ENCODE measurements at regions of chr18 and their contacts with region 1.

Region 1: DNA sequence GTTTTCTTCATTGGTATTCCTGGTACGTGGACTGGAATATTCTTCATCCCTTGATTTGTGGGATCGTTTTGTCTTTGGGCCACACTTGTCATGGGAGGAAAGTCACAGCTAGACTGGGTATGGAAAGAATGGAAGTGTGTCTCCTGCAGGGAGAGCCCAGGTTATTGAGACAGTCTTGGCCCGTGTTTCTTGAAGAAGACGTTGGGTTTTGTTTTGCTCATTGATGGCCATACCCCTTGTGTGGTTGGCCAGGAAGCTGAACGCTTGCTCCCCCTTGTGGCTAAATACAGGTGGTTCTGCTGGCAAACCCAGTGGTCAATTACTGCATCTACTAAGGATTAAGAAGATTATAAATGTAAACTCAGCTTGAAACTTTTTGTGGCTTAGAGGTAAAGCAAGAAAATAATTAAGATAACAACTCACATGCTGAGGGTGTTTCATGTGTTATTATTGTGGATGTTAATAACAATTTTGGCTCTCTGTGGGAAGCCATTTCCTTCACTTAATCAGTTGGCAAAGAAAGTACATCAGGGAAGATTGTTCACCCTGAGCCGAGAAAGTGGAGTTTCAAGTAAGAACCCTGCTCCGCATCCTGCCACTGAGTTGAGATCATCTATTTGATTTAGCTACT is 91.8 kb downstream of the NEDD4L start:
- DNase-seq: peak; percentile 74
- ATAC-seq: peak; percentile 69
- H3K4me3 ChIP-seq: peak overlapping the region; percentile 18; the same call in 1 of the 2 replicates
- H3K27ac ChIP-seq: no peak overlapping the region
- H3K4me1 ChIP-seq: peaks cover 8% of the 10 kb centered on the region
- H3K27me3 ChIP-seq: no peaks in the 10 kb centered on the region
- CTCF ChIP-seq: peak; percentile 79
- POLR2A ChIP-seq: no peak
- RAD21 ChIP-seq: peak; percentile 70

Region 2: DNA sequence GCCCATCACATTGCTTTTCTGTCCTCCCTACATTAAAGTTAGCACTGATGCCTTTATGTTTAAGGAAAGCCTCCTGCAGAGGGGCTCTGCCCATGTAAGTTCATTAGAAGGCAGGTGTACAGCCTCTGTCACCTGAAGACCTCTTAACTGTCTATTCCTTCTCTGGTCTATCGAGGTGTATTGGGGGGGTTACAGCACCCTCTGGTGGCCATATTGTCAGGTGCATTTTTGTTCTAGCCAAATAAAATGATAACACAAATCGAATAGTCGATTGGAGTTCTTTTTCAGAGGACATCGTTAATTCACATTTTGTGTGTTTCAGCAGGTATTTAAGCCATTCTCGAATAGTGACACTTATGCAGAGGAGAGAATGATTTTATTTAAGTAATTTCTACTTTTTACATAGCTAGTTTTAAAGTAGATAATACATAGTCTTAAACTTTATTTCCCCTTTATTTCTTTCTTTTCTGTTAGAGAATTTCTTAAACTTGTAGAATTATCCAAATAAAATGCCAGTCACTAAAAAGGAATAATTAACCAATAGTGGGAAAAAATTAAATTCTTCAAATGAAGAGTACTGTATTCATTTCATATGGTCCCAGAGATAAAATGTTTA is 45.0 kb after region 1 on chr18:
- CTCF ChIA-PET with region 1: no interaction called
- POLR2A ChIA-PET with region 1: no interaction called
- dilution Hi-C with region 1: no loop called
- in situ Hi-C with region 1: no loop called
- intact Hi-C with region 1: loop called (anchors 2 kb)
- DNase-seq: peak; percentile 47
- ATAC-seq: no peak
- H3K4me3 ChIP-seq: no peak overlapping the region
- H3K27ac ChIP-seq: no peak overlapping the region
- H3K4me1 ChIP-seq: peaks cover 23% of the 10 kb centered on the region
- H3K27me3 ChIP-seq: no peaks in the 10 kb centered on the region
- CTCF ChIP-seq: peak; percentile 77
- POLR2A ChIP-seq: no peak
- RAD21 ChIP-seq: peak; percentile 70

Region 3: DNA sequence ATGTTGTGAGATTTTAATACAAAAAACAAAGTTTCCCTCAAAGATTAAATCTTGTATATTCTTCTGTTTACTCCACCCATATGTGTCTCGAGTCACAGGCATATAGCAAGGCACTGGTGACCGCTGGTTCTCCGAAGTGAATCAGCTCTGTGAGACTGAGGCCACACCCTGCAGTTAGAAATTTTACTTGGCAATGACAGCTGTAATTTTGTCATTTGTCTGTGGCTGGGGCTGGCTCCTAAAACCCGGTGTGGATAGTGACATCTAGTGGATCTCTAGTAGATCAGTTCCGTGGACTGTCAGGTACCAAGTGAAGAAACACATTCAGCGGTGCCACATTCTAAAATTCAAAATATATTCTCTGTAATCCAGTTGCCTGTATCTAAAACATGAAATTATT is 186.2 kb after region 1 on chr18:
- CTCF ChIA-PET with region 1: interaction called, 4 read pairs
- POLR2A ChIA-PET with region 1: no interaction called
- dilution Hi-C with region 1: no loop called
- in situ Hi-C with region 1: no loop called
- intact Hi-C with region 1: loop called (anchors 5 kb)
- DNase-seq: peak; percentile 74
- ATAC-seq: peak; percentile 91
- H3K4me3 ChIP-seq: no peak overlapping the region
- H3K27ac ChIP-seq: no peak overlapping the region
- H3K4me1 ChIP-seq: peaks cover 6% of the 10 kb centered on the region; the same call in 1 of the 2 replicates
- H3K27me3 ChIP-seq: no peaks in the 10 kb centered on the region
- CTCF ChIP-seq: peak; percentile 62
- POLR2A ChIP-seq: no peak
- RAD21 ChIP-seq: peak; percentile 88

Region 4: GRCh38 chr18:58615140-58616132 is 479.6 kb after region 1 on chr18:
- CTCF ChIA-PET with region 1: no interaction called
- POLR2A ChIA-PET with region 1: no interaction called
- dilution Hi-C with region 1: no loop called
- in situ Hi-C with region 1: no loop called
- intact Hi-C with region 1: no loop called
- DNase-seq: peak; percentile 30
- ATAC-seq: no peak
- H3K4me3 ChIP-seq: no peak overlapping the region
- H3K27ac ChIP-seq: no peak overlapping the region
- H3K4me1 ChIP-seq: peaks cover 5% of the 10 kb centered on the region; the same call in 1 of the 2 replicates
- H3K27me3 ChIP-seq: peaks cover 7% of the 10 kb centered on the region
- CTCF ChIP-seq: no peak
- POLR2A ChIP-seq: no peak
- RAD21 ChIP-seq: no peak

Measured in IMR-90 (cell line).